B cell (primary cell): ENCODE measurements at regions of chr2 and their contacts with region 1.

Region 1: DNA sequence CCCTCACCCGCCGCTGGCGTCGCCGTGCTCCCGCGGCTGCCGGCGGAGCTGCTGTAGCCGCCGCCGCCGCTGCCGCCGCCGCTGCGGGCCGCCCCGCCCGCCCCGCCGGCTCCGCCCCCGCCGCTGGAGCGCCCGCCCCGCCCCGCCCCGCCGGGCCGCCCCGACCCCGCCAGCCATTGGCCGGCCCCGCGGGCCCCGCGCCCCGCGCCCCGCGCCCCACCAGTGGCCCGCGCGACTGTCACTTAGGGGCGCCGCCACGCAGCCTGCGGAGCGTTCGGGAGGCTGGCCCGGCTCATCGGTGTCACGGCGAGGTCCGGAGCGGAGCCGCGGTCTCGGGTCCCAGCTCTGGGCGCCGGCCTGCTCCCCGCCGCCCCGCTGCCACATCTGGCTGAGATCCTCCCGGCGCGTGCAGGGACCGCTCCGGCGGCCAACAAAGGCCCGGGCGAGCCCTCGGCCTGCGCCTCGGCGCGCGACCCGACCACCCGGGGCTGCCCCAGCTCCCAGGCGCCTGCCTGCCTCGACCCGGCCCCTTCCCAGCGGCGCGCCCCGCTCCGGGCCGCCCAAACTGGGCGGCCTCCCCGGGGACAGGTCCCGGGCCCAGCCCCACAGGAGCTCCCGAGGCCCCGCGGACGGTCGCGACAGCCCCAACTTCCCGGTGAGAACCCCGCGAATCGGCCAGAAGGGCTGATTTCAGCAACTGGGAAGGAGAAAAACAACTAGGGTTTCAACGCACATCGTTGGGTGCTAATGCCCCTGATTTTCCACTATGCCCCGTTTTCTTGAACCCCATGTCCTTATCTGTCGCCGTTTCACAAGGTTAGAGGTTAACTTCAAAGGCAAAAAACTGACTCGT is at the start of gene MGAT4A:
- DNase-seq: peak; percentile 85
- ATAC-seq: peak; percentile 86
- H3K4me3 ChIP-seq: peak within 1 kb of the TSS; percentile 48 to 94 (median 63)
- H3K4me3 Mint-ChIP-seq: peak within 1 kb of the TSS; percentile 93
- H3K27ac ChIP-seq: peak within 1 kb of the TSS; percentile 44 to 75
- H3K27ac Mint-ChIP-seq: peak within 1 kb of the TSS; percentile 91
- H3K4me1 ChIP-seq: peaks cover 27 to 42% of the 10 kb centered on the region in 2 donors
- H3K4me1 Mint-ChIP-seq: peaks cover 53% of the 10 kb centered on the region
- H3K27me3 ChIP-seq: no peaks in the 10 kb centered on the region
- H3K27me3 Mint-ChIP-seq: no peaks in the 10 kb centered on the region
- CTCF ChIP-seq: no peak
- total RNA-seq, gene MGAT4A: 28.9 and 32.7 TPM in 2 replicates

Region 2: GRCh38 chr2:98608116-98608999 is 122.9 kb before region 1 on chr2 and contains the starts of genes COA5 and UNC50:
- CTCF ChIA-PET with region 1: no interaction called
- POLR2A ChIA-PET with region 1: no interaction called
- intact Hi-C with region 1: loop called (anchors 1 kb)
- DNase-seq: peak; percentile 94
- ATAC-seq: peak; percentile 92
- H3K4me3 ChIP-seq: peak within 1 kb of the TSS; percentile 88 to 99 (median 97)
- H3K4me3 Mint-ChIP-seq: peak within 1 kb of the TSS; percentile 93
- H3K27ac ChIP-seq: peak within 1 kb of the TSS; percentile 86 to 97
- H3K27ac Mint-ChIP-seq: peak within 1 kb of the TSS; percentile 94
- H3K4me1 ChIP-seq: peaks cover 33 to 35% of the 10 kb centered on the region in 2 donors
- H3K4me1 Mint-ChIP-seq: peaks cover 67% of the 10 kb centered on the region
- H3K27me3 ChIP-seq: no peaks in the 10 kb centered on the region
- H3K27me3 Mint-ChIP-seq: no peaks in the 10 kb centered on the region
- CTCF ChIP-seq: no peak
- total RNA-seq, gene COA5: 46.9 and 48.9 TPM in 2 replicates
- total RNA-seq, gene UNC50: 38.8 and 45.5 TPM in 2 replicates

Region 3: DNA sequence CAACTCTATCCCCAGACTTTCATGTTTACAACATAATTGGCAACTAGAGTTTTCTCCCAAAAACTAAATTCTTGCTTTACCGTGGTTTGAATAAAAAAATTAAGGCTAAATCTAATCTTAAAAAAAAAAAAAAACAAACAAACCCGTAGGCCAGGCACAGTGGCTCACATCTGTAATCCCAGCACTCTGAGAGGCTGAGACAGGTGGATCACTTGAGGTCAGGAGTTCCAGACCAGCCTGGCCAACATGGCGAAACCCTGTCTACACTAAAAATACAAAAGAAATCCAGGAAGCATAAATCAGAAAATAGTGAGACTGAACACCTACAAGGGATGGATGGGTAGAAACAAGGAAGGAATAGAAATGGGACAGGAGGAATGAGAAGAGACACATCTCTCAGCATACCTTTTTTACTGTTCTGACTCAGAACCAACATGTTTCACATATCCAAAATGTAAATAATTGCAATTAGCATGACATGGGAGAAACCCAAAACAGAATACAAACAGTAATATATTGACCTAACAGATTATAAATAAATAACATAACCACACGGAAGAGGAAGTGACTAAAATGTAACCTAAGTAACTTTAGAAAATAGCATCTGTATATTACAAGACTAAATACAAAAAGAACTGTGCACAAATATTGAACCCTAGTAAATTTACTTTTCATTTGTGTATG is 17.8 kb before region 1 on chr2:
- CTCF ChIA-PET with region 1: interaction called, 15 read pairs
- POLR2A ChIA-PET with region 1: no interaction called
- intact Hi-C with region 1: loop called (anchors 2 kb)
- DNase-seq: no peak
- ATAC-seq: peak; percentile 20
- H3K4me3 ChIP-seq: peak overlapping the region in 1 of 5 experiments; percentile 27
- H3K4me3 Mint-ChIP-seq: peak overlapping the region; percentile 44
- H3K27ac ChIP-seq: no peak overlapping the region
- H3K27ac Mint-ChIP-seq: peak overlapping the region; percentile 80
- H3K4me1 ChIP-seq: peaks cover 38 to 46% of the 10 kb centered on the region in 2 donors
- H3K4me1 Mint-ChIP-seq: peaks cover 72% of the 10 kb centered on the region
- H3K27me3 ChIP-seq: no peaks in the 10 kb centered on the region
- H3K27me3 Mint-ChIP-seq: no peaks in the 10 kb centered on the region
- CTCF ChIP-seq: no peak

Region 4: DNA sequence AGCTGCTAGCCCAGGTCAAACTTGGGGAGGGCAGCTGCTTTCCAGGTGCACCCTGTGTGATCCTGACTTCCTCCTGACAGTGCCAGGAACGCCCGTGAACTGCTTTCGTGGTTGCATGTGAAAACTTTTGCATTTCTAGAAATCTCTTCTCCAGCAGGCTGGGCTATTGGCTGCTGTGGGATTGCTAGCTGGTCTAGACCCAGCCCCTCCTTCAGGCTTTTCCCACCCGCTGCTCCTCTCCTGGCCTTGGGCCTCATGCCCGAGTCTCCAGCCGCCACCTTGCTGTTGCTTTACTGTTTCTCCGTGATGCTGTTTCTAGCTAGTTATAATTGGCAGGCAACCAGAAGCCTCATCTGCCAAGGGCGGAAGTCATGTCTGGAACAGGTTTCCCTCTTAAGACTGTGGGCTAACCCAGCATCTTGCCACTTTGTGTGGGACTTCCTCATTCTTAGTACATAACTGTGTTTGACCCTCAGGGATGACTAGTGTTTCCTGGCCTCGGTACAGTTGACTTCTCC is 26.7 kb after region 1 on chr2:
- CTCF ChIA-PET with region 1: interaction called, 7 read pairs
- POLR2A ChIA-PET with region 1: interaction called, 3 read pairs
- intact Hi-C with region 1: loop called (anchors 1 kb)
- DNase-seq: peak; percentile 81
- ATAC-seq: peak; percentile 91
- H3K4me3 ChIP-seq: peak overlapping the region in 4 of 5 experiments; percentile 5 to 42 (median 31)
- H3K4me3 Mint-ChIP-seq: peak overlapping the region; percentile 76
- H3K27ac ChIP-seq: peak overlapping the region; percentile 38 to 70
- H3K27ac Mint-ChIP-seq: peak overlapping the region; percentile 81
- H3K4me1 ChIP-seq: peaks cover 57 to 60% of the 10 kb centered on the region in 2 donors
- H3K4me1 Mint-ChIP-seq: peaks cover 51% of the 10 kb centered on the region
- H3K27me3 ChIP-seq: no peaks in the 10 kb centered on the region
- H3K27me3 Mint-ChIP-seq: no peaks in the 10 kb centered on the region
- CTCF ChIP-seq: no peak

Region 5: GRCh38 chr2:98835831-98836385 is 104.6 kb after region 1 on chr2:
- CTCF ChIA-PET with region 1: interaction called, 7 read pairs
- POLR2A ChIA-PET with region 1: interaction called, 3 read pairs
- intact Hi-C with region 1: loop called (anchors 1 kb)
- DNase-seq: no peak
- ATAC-seq: no peak
- H3K4me3 ChIP-seq: no peak overlapping the region
- H3K4me3 Mint-ChIP-seq: no peak overlapping the region
- H3K27ac ChIP-seq: no peak overlapping the region
- H3K27ac Mint-ChIP-seq: no peak overlapping the region
- H3K4me1 ChIP-seq: peaks cover 0 to 3% of the 10 kb centered on the region in 2 donors
- H3K4me1 Mint-ChIP-seq: peaks cover 7% of the 10 kb centered on the region
- H3K27me3 ChIP-seq: no peaks in the 10 kb centered on the region
- H3K27me3 Mint-ChIP-seq: no peaks in the 10 kb centered on the region
- CTCF ChIP-seq: no peak

Region 6: DNA sequence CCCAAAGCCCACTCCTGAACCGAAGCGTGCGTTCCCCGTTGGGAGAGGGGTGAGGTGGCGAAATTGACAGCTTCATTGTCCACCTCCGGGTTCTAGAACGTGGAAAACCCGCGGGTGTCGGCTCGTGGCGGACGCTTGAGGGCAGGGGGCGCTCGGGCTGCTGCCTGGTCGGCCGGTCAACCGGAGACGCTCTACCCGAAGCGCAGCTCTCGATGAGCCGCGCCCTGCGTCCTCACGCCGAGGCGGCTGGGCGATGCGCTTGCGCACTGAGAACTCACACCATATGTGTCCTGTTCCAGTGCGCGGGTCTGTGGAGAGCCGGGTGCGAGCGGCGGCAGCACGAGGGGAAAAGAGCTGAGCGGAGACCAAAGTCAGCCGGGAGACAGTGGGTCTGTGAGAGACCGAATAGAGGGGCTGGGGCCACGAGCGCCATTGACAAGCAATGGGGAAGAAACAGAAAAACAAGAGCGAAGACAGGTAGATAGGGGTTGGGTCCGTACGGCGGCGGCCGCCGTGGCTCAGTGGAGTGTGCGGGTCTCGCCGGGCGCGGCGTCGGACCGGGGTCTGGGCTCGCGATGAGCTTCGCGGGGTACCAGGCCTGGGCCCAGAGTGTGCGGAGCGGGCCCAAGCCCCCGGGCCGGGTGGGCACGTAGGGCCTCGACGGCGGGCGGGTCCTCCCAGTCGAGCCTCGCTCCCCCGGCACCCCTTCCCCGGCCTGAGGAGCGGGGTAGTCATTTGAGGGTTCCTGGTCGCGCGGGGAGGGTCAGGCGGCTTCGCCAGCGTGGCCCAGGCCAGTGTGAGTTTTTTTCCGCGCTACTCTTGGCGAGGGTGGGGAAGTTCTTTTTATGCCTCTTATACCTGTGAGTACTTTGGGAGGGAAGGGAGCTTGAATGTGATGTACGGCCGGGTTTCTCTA is 606.1 kb after region 1 on chr2 and contains the start of gene EIF5B:
- CTCF ChIA-PET with region 1: no interaction called
- POLR2A ChIA-PET with region 1: no interaction called
- intact Hi-C with region 1: loop called (anchors 2 kb)
- DNase-seq: peak; percentile 96
- ATAC-seq: peak; percentile 63
- H3K4me3 ChIP-seq: peak within 1 kb of the TSS; percentile 78 to 95 (median 87)
- H3K4me3 Mint-ChIP-seq: no peak within 1 kb of the TSS
- H3K27ac ChIP-seq: peak within 1 kb of the TSS; percentile 90 to 93
- H3K27ac Mint-ChIP-seq: no peak within 1 kb of the TSS
- H3K4me1 ChIP-seq: peaks cover 14 to 31% of the 10 kb centered on the region in 2 donors
- H3K4me1 Mint-ChIP-seq: peaks cover 29% of the 10 kb centered on the region
- H3K27me3 ChIP-seq: no peaks in the 10 kb centered on the region
- H3K27me3 Mint-ChIP-seq: no peaks in the 10 kb centered on the region
- CTCF ChIP-seq: peak; percentile 70
- total RNA-seq, gene EIF5B: 32.8 and 33.0 TPM in 2 replicates